ENCODE measurements at regions of chr2 and their contacts with region 1.

Region 1: GRCh38 chr2:63861220-63861822 is 19.6 kb downstream of the UGP2 start:
- DNase-seq: peak; percentile 47
- H3K4me3 ChIP-seq: no peak overlapping the region
- H3K27ac ChIP-seq: no peak overlapping the region
- H3K4me1 ChIP-seq: no peaks in the 10 kb centered on the region; a peak in 2 of 4 replicates
- H3K27me3 ChIP-seq: no peaks in the 10 kb centered on the region
- CTCF ChIP-seq: peak; percentile 73
- EP300 ChIP-seq: no peak
- RAD21 ChIP-seq: peak; percentile 87

Region 2: DNA sequence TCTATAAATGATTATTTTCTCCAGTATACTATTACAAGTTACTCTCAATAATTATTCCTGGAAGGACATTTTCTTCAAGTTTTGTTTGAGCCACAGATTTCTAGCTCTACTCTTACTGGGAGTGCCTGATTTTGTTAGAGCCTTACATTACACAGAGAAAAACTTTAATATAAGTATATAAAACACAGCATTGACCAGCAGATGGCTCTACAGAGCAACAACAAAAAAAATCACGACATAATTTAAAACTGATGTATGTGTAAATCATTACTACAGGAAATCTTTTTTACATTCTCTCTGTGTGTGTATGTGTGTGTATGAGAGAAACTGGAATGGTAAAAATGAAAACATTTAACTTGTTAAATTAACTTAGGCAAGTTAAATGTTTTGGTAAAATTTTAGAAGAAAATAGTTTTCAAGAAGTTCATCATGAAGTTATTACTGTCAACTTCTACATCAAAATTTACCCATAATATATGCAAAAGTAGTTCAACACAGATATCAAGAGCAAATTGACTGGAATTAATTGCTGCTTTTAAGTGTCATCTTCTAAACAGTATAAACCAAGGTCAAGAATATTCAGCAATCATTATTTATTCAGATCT is 169.2 kb before region 1 on chr2:
- CTCF ChIA-PET with region 1: interaction called, 71 read pairs
- POLR2A ChIA-PET with region 1: no interaction called
- DNase-seq: peak; percentile 39
- H3K4me3 ChIP-seq: no peak overlapping the region
- H3K27ac ChIP-seq: no peak overlapping the region
- H3K4me1 ChIP-seq: peaks cover 0 to 2% of the 10 kb centered on the region in 2 experiments; a peak in 1 of 4 replicates
- H3K27me3 ChIP-seq: no peaks in the 10 kb centered on the region
- CTCF ChIP-seq: peak; percentile 76
- EP300 ChIP-seq: no peak
- RAD21 ChIP-seq: peak; percentile 78

Region 3: GRCh38 chr2:63698825-63699548 is 162.3 kb before region 1 on chr2:
- CTCF ChIA-PET with region 1: interaction called, 71 read pairs
- POLR2A ChIA-PET with region 1: no interaction called
- DNase-seq: peak; percentile 42
- H3K4me3 ChIP-seq: no peak overlapping the region; a peak in 1 of 4 replicates
- H3K27ac ChIP-seq: peak overlapping the region; percentile 29 to 56; a peak in 3 of 4 replicates
- H3K4me1 ChIP-seq: peaks cover 5 to 9% of the 10 kb centered on the region in 2 experiments; a peak in 3 of 4 replicates
- H3K27me3 ChIP-seq: no peaks in the 10 kb centered on the region
- CTCF ChIP-seq: peak; percentile 71
- EP300 ChIP-seq: peak in 1 of 2 experiments; percentile 22; a peak in 1 of 4 replicates
- RAD21 ChIP-seq: peak; percentile 78

Region 4: DNA sequence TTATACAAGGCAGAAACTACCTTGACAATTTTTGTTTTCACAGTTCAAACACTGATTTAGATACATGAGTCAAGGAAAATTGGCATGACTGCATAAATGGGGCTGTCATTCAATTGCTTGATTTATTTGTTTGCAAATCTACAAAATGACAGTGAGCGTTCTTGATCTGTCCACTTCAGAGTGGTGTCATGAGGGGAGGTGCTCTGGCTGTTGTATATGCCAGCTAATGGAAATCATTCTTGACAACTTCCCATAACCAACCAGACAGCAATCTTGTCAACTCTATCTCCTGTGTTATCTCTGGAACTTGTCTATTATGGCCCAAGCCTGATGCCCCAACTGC is 140.3 kb before region 1 on chr2:
- CTCF ChIA-PET with region 1: no interaction called
- POLR2A ChIA-PET with region 1: no interaction called
- DNase-seq: peak; percentile 63
- H3K4me3 ChIP-seq: no peak overlapping the region
- H3K27ac ChIP-seq: peak overlapping the region in 1 of 2 experiments; percentile 64; a peak in 2 of 4 replicates
- H3K4me1 ChIP-seq: peaks cover 8 to 9% of the 10 kb centered on the region in 2 experiments; a peak in 3 of 4 replicates
- H3K27me3 ChIP-seq: no peaks in the 10 kb centered on the region
- CTCF ChIP-seq: no peak
- EP300 ChIP-seq: peak in 1 of 2 experiments; percentile 89; a peak in 3 of 4 replicates
- RAD21 ChIP-seq: no peak

Region 5: GRCh38 chr2:63849381-63850203 is 11.7 kb before region 1 on chr2:
- CTCF ChIA-PET with region 1: interaction called, 19 read pairs
- POLR2A ChIA-PET with region 1: no interaction called
- DNase-seq: no peak
- H3K4me3 ChIP-seq: no peak overlapping the region
- H3K27ac ChIP-seq: peak overlapping the region; percentile 36 to 47; a peak in 3 of 4 replicates
- H3K4me1 ChIP-seq: peaks cover 11 to 27% of the 10 kb centered on the region in 2 experiments
- H3K27me3 ChIP-seq: no peaks in the 10 kb centered on the region
- CTCF ChIP-seq: no peak
- EP300 ChIP-seq: no peak
- RAD21 ChIP-seq: no peak

Region 6: DNA sequence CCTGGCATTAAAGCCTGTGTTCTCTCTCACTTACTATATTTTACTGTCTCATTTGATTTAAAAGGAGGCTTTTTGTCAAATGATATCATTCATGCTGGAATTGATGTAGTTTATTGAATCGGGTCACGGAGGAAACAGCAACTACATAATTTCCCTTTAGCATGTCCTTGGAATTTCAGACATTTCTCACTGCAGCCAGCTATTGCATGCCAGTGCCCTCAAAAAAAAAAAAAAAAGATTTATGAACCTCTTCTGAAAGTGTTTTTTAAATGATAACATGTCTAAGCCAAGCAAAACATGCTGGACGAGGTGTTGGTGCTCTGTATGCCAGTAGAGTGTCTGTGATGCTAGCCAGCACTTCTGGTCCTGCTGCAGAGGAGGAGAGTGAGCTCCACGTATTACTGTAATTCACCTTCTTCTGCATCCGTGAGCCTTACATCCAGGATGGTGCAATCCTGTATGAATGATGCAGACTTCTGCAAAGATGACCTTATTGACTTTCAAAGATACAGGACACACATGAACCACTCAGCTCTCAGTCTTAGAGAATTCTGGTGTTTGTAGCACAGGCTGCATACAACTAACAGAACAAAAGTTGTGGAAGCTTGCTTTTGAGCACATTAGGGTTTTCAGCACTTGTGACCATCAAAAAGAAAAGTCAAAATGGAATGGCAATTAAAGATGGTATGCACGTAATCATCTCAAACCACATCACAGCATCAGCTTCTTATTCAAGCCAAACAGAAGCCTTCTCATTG is 11.4 kb after region 1 on chr2:
- CTCF ChIA-PET with region 1: interaction called, 13 read pairs
- POLR2A ChIA-PET with region 1: no interaction called
- DNase-seq: no peak
- H3K4me3 ChIP-seq: no peak overlapping the region
- H3K27ac ChIP-seq: no peak overlapping the region
- H3K4me1 ChIP-seq: peaks cover 0 to 6% of the 10 kb centered on the region in 2 experiments; a peak in 3 of 4 replicates
- H3K27me3 ChIP-seq: no peaks in the 10 kb centered on the region
- CTCF ChIP-seq: no peak
- EP300 ChIP-seq: no peak
- RAD21 ChIP-seq: no peak